AG04449 (cell line): ENCODE measurements at regions of chr5 and their contacts with region 1.

Region 1: GRCh38 chr5:138542956-138543729 is at the start of gene ETF1:
- DNase-seq: peak; percentile 97
- H3K4me3 ChIP-seq: peak within 1 kb of the TSS; percentile 97
- CTCF ChIP-seq: no peak

Region 2: GRCh38 chr5:138418444-138418843 is 124.7 kb before region 1 on chr5:
- CTCF ChIA-PET with region 1: no interaction called
- POLR2A ChIA-PET with region 1: no interaction called
- DNase-seq: no peak
- H3K4me3 ChIP-seq: no peak overlapping the region
- CTCF ChIP-seq: no peak

Region 3: DNA sequence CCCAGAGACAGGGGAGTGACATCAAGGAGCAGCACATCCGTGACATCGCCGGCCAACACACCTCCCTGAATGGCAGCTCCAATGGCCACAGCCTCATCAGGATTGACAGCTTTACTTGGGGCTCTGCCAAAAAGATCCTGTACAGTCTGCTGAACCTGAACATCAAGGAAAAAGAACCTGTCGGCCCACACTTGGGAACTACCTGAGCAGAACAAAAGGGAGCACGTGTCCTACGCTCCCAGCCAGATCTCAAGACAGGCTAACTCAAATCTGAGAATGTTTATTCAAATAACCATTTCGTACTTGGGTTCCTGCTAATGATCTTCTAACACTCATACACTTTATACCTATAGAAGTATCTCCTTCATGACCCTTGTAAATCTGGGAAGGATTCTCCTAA is 16.8 kb after region 1 on chr5:
- CTCF ChIA-PET with region 1: interaction called, 14 read pairs
- POLR2A ChIA-PET with region 1: interaction called, 4 read pairs
- DNase-seq: no peak
- H3K4me3 ChIP-seq: no peak overlapping the region
- CTCF ChIP-seq: no peak